Heart left ventricle (tissue), 16 donors: ENCODE measurements at regions of chr3 and their contacts with region 1.

Region 1: DNA sequence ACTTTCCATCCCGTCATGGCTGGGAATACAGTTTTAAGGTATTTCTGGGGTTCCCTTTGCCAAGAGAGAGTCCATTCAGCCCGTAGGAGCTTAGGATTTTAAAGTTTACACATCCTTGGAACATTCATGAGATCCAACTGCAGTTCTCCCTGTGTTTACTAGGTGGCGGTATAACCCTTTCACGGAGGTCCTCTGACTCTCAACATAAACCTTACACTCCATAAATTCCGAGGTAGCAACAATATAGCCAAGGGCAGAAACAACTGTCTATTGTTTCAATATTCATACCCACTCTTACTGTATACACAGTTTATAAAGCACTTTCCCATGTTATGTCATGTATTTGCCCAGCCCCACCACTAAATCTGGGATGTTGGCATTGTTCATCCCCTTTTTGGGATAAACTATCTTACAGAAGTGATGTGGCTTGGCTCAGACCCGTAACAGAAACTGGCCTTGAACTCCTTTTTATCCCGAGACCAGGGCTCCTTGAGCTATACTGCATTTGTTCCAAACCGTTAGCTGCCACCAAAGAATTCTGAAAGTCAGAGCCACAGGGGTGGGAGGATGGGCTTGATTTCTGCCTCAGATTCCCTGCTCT is 69.2 kb upstream of the COL6A5 start:
- DNase-seq: no peak
- ATAC-seq: peak in 2 of 4 donors; percentile 46 to 61
- H3K4me3 ChIP-seq: no peak overlapping the region
- H3K27ac ChIP-seq: no peak overlapping the region
- H3K4me1 ChIP-seq: no peaks in the 10 kb centered on the region
- H3K27me3 ChIP-seq: peaks cover 0 to 11% (median 0%) of the 10 kb centered on the region in 9 donors
- CTCF ChIP-seq: peak; percentile 47 to 77 (median 68)
- POLR2A ChIP-seq: no peak

Region 2: GRCh38 chr3:129645290-129645689 is 631.0 kb before region 1 on chr3:
- intact Hi-C with region 1: no loop called
- DNase-seq: no peak
- ATAC-seq: no peak
- H3K4me3 ChIP-seq: no peak overlapping the region
- H3K27ac ChIP-seq: no peak overlapping the region
- H3K4me1 ChIP-seq: peaks cover 0 to 9% (median 0%) of the 10 kb centered on the region in 12 donors
- H3K27me3 ChIP-seq: no peaks in the 10 kb centered on the region
- CTCF ChIP-seq: no peak
- POLR2A ChIP-seq: no peak

Region 3: GRCh38 chr3:130539005-130539404 is 262.7 kb after region 1 on chr3:
- intact Hi-C with region 1: loop called in 2 of 10 experiments (anchors 10 kb)
- DNase-seq: peak in 1 of 5 donors; percentile 16
- ATAC-seq: no peak
- H3K4me3 ChIP-seq: no peak overlapping the region
- H3K27ac ChIP-seq: no peak overlapping the region
- H3K4me1 ChIP-seq: peaks cover 0 to 5% (median 0%) of the 10 kb centered on the region in 12 donors
- H3K27me3 ChIP-seq: no peaks in the 10 kb centered on the region
- CTCF ChIP-seq: peak in 11 of 12 donors; percentile 14 to 54 (median 42)
- POLR2A ChIP-seq: no peak

Region 4: DNA sequence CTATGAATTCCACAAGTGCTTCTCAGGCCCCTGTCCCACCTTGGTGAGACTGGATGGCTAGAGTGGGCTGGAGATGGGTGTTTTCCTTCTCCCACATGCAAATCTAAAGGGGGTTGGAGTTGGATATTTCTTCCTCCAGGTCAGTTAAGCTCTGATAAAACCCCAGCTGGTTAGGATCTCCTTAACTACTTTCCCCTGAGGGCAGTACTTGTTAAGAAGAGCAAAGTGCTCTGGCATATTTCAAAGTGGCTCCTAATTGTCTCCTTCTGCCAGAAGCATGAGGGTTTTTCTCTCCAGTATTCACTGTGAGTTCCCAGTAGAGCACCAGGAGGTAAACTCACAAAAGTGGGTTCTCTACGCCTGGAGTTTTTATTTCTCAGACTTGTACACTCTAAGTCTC is 272.1 kb after region 1 on chr3:
- intact Hi-C with region 1: loop called in 1 of 10 experiments (anchors 10 kb)
- DNase-seq: no peak
- ATAC-seq: no peak
- H3K4me3 ChIP-seq: no peak overlapping the region
- H3K27ac ChIP-seq: no peak overlapping the region
- H3K4me1 ChIP-seq: no peaks in the 10 kb centered on the region
- H3K27me3 ChIP-seq: no peaks in the 10 kb centered on the region
- CTCF ChIP-seq: no peak
- POLR2A ChIP-seq: no peak